Caco-2 (cell line): ENCODE measurements at regions of chr12 and their contacts with region 1.

Region 1: DNA sequence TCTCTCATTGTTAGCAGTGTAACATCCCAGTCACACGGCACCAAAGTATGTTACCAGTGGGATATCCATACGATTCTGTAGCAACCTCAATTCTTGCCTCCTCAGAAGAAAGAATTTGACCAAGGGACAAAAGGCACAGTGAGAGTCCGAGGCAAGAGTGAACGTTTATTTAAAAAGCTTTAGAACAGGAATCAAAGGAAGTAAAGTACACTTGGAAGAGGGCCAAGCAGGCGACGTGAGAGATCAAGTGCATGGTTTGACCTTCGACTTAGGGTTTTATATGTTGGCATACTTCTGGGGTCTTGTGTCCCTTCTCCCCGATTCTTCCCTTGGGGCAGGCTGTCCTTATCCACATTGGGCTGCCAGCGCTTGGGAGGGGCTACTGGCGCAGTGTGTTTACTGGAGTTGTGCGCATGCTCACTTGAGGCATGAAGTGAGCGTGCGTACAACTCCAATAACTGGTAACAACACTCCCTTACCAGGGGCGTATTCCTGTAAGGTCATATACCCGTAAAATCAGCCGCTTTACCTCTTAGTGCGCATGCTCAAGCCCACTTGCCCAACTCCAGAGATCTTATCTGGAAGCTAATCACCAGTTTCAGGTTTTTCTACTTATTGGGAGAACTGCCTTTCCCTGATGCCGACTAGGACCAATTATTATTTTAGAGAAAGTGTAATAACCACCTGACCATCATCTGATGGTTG is 71.7 kb downstream of the FAR2 start:
- DNase-seq: peak; percentile 93 to 98
- H3K4me3 ChIP-seq: peak overlapping the region; percentile 37
- H3K4me3 Mint-ChIP-seq: peak overlapping the region; percentile 86
- H3K27ac Mint-ChIP-seq: peak overlapping the region; percentile 92
- H3K4me1 ChIP-seq: peaks cover 16% of the 10 kb centered on the region
- H3K4me1 Mint-ChIP-seq: peaks cover 15% of the 10 kb centered on the region
- H3K27me3 ChIP-seq: no peaks in the 10 kb centered on the region
- H3K27me3 Mint-ChIP-seq: peaks cover 10% of the 10 kb centered on the region
- CTCF ChIP-seq: no peak

Region 2: DNA sequence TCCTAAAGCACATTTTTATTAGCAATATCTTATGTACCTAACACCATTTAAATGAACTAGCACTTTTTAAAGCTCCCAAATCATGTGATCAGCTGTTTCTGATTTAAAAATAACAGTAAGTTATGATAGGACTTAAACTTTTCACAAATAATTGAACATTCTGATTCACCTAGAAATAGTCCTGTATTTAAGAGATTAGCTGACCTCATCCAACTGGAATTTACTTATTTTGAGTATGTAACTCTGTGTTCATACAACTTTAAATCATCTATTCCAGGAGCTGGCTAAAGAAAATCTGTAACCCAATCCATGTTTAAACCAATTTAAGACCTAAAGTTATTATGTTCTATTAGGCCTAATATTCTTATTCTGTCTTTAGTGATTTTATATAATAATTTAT is 846.2 kb before region 1 on chr12:
- CTCF ChIA-PET with region 1: no interaction called
- POLR2A ChIA-PET with region 1: no interaction called
- intact Hi-C with region 1: no loop called
- DNase-seq: no peak
- H3K4me3 ChIP-seq: no peak overlapping the region
- H3K4me3 Mint-ChIP-seq: no peak overlapping the region
- H3K27ac Mint-ChIP-seq: no peak overlapping the region
- H3K4me1 ChIP-seq: no peaks in the 10 kb centered on the region
- H3K4me1 Mint-ChIP-seq: no peaks in the 10 kb centered on the region
- H3K27me3 ChIP-seq: no peaks in the 10 kb centered on the region
- H3K27me3 Mint-ChIP-seq: no peaks in the 10 kb centered on the region
- CTCF ChIP-seq: no peak

Region 3: DNA sequence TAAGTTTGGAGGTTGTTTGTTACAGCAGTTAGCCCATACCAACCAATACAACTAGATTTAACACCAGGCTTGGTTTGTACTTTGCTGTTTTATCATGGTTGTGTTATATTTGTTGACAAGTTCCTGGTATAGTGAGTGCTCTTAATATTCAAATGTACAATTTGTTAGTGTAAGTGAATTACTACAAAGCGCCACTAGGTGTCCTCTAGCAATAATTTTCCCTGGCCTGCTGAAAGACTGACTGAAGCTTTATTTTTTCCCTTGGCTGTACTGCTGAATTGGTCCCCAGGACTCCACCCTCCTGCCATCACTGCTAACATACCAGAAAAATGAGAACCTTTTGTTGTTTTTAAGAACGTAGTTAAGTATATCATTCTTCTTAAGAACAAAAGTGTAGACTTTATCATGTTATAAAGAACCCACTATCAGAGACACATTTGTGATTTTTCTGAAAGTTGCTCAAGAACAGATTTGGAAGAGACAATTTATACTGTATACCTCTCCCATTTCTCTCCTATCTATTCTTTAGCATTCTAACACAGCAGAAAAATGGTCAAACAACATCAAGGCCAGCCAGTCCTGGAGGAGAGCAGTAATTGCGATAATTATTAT is 147.1 kb before region 1 on chr12:
- CTCF ChIA-PET with region 1: no interaction called
- POLR2A ChIA-PET with region 1: no interaction called
- intact Hi-C with region 1: no loop called
- DNase-seq: peak in 1 of 2 experiments; percentile 57
- H3K4me3 ChIP-seq: no peak overlapping the region
- H3K4me3 Mint-ChIP-seq: no peak overlapping the region
- H3K27ac Mint-ChIP-seq: no peak overlapping the region
- H3K4me1 ChIP-seq: no peaks in the 10 kb centered on the region
- H3K4me1 Mint-ChIP-seq: peaks cover 6% of the 10 kb centered on the region
- H3K27me3 ChIP-seq: no peaks in the 10 kb centered on the region
- H3K27me3 Mint-ChIP-seq: peaks cover 2% of the 10 kb centered on the region
- CTCF ChIP-seq: peak; percentile 74 to 84

Region 4: DNA sequence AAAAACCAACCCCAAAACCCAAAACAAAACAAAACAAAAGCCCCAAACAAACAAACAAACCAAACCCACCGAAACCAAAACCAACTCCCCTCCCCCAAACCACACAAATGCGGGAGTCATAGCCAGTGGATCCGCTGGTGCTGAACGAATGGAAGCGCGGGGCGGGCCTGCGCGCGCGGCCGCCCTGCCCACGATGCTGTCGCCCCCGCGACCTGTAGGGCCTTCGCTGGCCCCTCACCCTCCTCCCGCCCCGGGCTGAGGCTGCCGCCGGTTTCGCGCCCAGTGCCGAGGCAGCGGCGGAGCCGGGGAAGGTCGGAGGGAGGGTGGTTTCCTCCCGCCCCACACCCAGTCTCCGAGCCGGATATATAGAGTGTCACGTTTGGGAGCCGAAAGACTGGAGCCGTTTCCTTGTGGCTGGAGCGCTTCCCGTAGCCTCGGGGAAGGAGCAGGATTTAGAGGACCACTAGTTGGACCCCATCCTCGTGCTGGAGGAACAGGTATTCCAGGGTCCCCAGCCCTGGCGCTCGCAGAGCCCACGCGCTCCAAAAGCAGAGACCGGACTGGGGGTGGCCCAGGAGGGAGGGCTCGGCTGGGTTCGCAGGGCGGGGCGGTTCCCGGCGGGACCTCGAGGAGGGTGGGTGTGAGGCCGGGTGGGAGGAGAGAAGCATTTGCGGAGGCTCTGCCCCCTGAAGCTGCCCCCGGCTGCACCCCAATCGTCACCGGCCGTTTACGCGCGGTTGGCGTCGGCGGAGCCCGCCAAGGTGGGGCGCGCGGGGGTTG is 71.7 kb before region 1 on chr12 and contains the start of gene FAR2:
- CTCF ChIA-PET with region 1: no interaction called
- POLR2A ChIA-PET with region 1: no interaction called
- intact Hi-C with region 1: loop called (anchors 2 kb)
- DNase-seq: peak; percentile 57 to 78
- H3K4me3 ChIP-seq: peak within 1 kb of the TSS; percentile 55
- H3K4me3 Mint-ChIP-seq: peak within 1 kb of the TSS; percentile 96
- H3K27ac Mint-ChIP-seq: peak within 1 kb of the TSS; percentile 96
- H3K4me1 ChIP-seq: no peaks in the 10 kb centered on the region; the same call in 1 of the 2 replicates
- H3K4me1 Mint-ChIP-seq: peaks cover 16% of the 10 kb centered on the region
- H3K27me3 ChIP-seq: no peaks in the 10 kb centered on the region
- H3K27me3 Mint-ChIP-seq: peaks cover 9% of the 10 kb centered on the region
- CTCF ChIP-seq: no peak
- total RNA-seq, gene FAR2: 6.6 and 8.2 TPM in 2 replicates

Region 5: DNA sequence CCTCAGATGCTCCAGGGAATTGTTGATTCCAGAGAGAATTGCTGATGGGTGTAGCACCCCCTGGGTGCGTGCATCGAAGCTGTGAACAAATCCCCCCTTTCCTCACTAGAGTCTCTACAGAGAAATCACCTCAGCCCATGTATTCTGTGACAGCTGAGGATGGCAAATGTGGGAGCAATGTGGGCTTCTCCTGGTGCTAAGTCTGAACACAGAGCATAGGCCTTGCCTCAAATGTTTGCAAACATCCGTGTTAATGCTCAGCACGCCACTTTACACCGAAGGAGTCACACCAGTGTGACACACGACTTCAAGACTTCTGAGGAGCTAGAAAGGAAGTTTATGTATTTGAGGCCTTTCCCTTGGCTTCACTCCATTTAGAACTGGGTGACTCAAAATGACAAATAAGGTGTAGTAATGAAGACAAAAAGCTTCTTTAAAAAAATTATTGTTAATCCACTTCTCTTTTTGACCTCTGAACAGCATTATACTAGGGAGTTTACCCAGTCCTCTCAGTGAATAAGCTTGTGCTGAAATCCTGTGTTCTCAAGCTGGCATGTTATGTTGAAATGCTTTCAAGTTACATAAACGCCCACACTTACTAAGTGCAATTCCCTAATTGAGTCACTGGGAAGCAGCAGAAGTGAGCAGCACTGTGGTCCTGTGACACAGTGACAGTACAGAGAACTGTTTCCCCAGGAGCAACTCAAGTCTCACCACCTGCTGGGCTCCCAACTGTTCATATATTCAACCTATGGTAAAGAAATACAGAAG is 21.2 kb after region 1 on chr12:
- CTCF ChIA-PET with region 1: no interaction called
- POLR2A ChIA-PET with region 1: no interaction called
- intact Hi-C with region 1: loop called (anchors 2 kb)
- DNase-seq: peak in 1 of 2 experiments; percentile 37
- H3K4me3 ChIP-seq: no peak overlapping the region
- H3K4me3 Mint-ChIP-seq: no peak overlapping the region
- H3K27ac Mint-ChIP-seq: no peak overlapping the region
- H3K4me1 ChIP-seq: no peaks in the 10 kb centered on the region
- H3K4me1 Mint-ChIP-seq: peaks cover 7% of the 10 kb centered on the region
- H3K27me3 ChIP-seq: no peaks in the 10 kb centered on the region; the same call in 1 of the 2 replicates
- H3K27me3 Mint-ChIP-seq: no peaks in the 10 kb centered on the region
- CTCF ChIP-seq: peak in 1 of 2 experiments; percentile 29

Region 6: DNA sequence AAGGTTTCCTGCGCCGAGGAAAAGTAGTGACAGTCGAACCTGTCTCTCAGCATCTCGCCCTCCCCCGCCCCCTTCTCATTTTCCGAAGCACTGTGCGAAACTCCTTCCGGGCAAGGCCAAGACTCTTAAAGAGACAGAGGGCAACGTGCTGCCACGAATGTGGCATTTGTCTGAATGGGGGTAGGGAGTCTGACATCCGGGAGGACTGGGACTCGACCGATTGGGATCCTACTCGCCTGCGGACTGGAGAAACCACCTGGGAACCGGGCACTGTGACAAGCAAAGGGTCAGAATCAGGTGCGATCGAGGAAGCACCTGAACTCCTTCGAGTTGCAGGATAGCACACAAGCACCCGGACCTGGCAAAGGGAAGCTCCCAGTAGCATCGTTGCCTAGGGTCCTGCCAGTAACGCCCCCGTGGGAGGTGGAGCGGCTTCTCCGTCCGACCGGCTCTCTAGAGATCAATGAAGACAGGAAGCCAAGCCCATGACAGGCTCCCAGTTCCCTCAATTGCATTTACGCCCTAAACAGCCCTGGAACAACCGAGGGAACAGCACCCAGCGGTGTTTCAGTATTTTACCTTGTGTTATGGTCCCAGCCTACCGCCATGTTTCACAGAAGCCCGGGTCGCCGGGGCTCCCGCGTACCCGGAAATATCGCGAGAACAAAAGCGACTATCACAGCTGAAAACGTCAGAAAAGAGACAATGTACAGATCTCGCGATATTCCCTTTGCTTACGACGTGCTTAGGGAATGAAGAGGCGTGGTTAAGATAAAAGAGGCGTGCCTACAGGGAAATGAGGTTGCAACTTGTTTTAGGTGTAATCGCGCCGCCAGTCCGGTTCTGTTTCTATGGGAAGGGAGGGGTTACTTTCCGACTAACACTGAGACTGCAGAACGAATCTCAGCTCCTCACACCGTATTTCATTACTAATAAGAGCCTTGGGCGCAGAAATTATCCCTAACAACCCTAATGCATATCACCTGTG is 160.0 kb after region 1 on chr12 and contains the start of gene ERGIC2:
- CTCF ChIA-PET with region 1: no interaction called
- POLR2A ChIA-PET with region 1: no interaction called
- intact Hi-C with region 1: loop called (anchors 2 kb)
- DNase-seq: peak; percentile 97
- H3K4me3 ChIP-seq: peak within 1 kb of the TSS; percentile 72
- H3K4me3 Mint-ChIP-seq: peak within 1 kb of the TSS; percentile 98
- H3K27ac Mint-ChIP-seq: peak within 1 kb of the TSS; percentile 98
- H3K4me1 ChIP-seq: peaks cover 11% of the 10 kb centered on the region; the same call in 1 of the 2 replicates
- H3K4me1 Mint-ChIP-seq: peaks cover 14% of the 10 kb centered on the region
- H3K27me3 ChIP-seq: no peaks in the 10 kb centered on the region
- H3K27me3 Mint-ChIP-seq: no peaks in the 10 kb centered on the region
- CTCF ChIP-seq: no peak
- total RNA-seq, gene ERGIC2: 111 and 128 TPM in 2 replicates